Esophagus muscularis mucosa (tissue), 4 donors: ENCODE measurements at regions of chr6 and their contacts with region 1.

Region 1: GRCh38 chr6:46626228-46626909 is 26.2 kb downstream of the CYP39A1 start:
- DNase-seq: no peak
- H3K4me3 ChIP-seq: no peak overlapping the region
- H3K27ac ChIP-seq: no peak overlapping the region
- H3K4me1 ChIP-seq: peaks cover 0 to 9% (median 3%) of the 10 kb centered on the region in 4 donors
- H3K27me3 ChIP-seq: no peaks in the 10 kb centered on the region
- CTCF ChIP-seq: peak; percentile 60 to 73 (median 64)
- EP300 ChIP-seq: no peak
- POLR2A ChIP-seq: no peak

Region 2: DNA sequence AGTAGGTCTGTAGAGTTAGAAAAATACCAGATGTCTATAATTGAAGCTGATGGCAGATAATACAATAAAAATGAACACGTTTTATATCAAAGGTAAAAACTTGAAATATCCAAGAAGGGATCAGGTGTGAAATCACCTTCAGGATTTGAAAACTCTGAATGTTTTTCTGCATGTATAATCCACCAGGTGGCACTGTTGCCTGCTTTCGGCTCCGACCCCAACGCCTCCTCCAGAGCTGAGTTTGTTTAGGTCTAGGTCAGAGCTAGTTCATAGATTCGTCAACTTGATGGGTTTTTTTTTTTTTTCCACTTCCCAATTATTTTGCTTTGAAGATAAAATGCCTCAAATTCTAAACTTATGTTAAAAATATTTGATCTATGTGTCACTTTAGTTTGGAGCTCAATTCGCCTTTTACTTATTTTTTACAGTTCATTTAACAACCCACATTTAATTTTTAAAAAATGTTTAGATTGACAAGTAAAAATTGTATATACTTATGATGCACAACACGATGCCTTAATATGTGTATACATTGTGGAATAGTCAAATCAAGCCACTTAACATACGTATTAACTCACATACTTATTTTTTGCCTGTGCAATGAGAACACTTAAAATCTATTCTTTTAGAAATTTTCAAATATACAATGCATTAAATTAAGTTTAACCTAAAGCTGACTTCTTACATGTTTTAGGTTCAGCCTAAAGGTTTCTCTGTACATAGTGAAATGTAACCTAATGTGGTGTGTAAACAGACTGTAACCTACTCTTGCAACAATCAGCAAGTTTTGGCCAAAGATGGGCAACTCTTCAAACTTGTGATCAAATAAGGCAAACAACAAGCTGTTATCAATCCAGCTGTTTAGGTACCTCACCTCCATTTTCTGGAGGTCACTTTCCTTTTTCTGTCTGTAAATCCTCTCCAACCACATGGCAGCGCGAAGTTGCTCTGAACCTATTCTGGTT is 536.0 kb before region 1 on chr6:
- intact Hi-C with region 1: loop called (anchors 10 kb)
- DNase-seq: no peak
- H3K4me3 ChIP-seq: no peak overlapping the region
- H3K27ac ChIP-seq: no peak overlapping the region
- H3K4me1 ChIP-seq: no peaks in the 10 kb centered on the region
- H3K27me3 ChIP-seq: no peaks in the 10 kb centered on the region
- CTCF ChIP-seq: peak; percentile 67 to 78 (median 76)
- EP300 ChIP-seq: no peak
- POLR2A ChIP-seq: no peak

Region 3: GRCh38 chr6:46419576-46420002 is 206.8 kb before region 1 on chr6:
- intact Hi-C with region 1: loop called (anchors 2 kb)
- DNase-seq: no peak
- H3K4me3 ChIP-seq: no peak overlapping the region
- H3K27ac ChIP-seq: no peak overlapping the region
- H3K4me1 ChIP-seq: peaks cover 0 to 25% (median 10%) of the 10 kb centered on the region in 4 donors
- H3K27me3 ChIP-seq: no peaks in the 10 kb centered on the region
- CTCF ChIP-seq: peak; percentile 74 to 82 (median 78)
- EP300 ChIP-seq: no peak
- POLR2A ChIP-seq: no peak

Region 4: DNA sequence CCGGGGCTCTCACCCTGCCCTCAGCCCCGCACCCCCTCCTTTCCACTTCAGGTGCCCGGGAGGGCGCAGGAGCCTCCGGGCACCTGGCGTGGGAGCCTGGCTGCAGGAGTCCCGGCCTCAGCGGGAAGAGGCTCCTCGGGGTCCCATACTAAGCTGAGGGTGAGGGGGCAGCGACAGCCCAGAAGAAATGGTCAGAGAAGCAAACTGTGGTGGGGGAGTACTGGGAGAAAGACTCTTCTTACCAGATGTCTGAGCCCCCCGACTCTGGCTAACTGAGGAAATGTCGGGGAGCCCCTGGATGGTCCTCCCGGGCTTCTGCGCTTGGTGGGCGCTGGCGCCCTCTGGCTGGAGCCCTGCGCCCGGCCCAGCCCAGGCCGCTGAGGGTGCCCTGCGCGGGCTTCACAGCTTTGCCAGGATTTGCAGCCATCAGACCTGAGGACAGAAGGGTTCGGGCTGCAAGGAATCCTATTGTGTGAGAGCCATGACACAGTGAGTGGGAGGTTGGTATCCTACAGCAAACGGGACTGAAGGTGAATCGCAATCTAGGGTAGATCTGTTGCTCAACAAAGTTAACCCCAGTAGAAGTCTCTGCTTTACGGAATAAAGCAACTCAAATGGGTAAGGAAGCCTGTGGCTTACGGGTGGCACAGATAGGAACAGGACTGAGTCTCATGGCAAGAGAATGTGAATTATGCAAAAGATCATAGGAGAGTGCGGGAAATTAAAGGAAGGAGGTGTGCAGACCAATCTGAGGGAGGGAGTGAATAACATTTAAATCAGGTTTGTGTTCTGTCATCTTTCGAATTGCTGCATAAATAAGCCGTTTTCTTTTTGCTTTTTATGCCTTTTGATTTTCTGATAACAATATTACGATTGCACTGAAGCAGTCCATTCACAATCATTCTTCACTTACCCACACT is 134.5 kb before region 1 on chr6:
- intact Hi-C with region 1: loop called (anchors 5 kb)
- DNase-seq: no peak
- H3K4me3 ChIP-seq: peak overlapping the region; percentile 64 to 83 (median 82)
- H3K27ac ChIP-seq: peak overlapping the region; percentile 78 to 89 (median 86)
- H3K4me1 ChIP-seq: peaks cover 5 to 26% (median 19%) of the 10 kb centered on the region in 4 donors
- H3K27me3 ChIP-seq: no peaks in the 10 kb centered on the region
- CTCF ChIP-seq: peak; percentile 67 to 80 (median 70)
- EP300 ChIP-seq: no peak
- POLR2A ChIP-seq: no peak